HEK293 (cell line): ENCODE measurements at regions of chr6 and their contacts with region 1.

Region 1: GRCh38 chr6:45714741-45715507 is 300.7 kb downstream of the CLIC5 start:
- H3K4me3 ChIP-seq: no peak overlapping the region
- H3K27ac ChIP-seq: no peak overlapping the region
- H3K4me1 ChIP-seq: peaks cover 9% of the 10 kb centered on the region
- CTCF ChIP-seq: peak; percentile 62

Region 2: DNA sequence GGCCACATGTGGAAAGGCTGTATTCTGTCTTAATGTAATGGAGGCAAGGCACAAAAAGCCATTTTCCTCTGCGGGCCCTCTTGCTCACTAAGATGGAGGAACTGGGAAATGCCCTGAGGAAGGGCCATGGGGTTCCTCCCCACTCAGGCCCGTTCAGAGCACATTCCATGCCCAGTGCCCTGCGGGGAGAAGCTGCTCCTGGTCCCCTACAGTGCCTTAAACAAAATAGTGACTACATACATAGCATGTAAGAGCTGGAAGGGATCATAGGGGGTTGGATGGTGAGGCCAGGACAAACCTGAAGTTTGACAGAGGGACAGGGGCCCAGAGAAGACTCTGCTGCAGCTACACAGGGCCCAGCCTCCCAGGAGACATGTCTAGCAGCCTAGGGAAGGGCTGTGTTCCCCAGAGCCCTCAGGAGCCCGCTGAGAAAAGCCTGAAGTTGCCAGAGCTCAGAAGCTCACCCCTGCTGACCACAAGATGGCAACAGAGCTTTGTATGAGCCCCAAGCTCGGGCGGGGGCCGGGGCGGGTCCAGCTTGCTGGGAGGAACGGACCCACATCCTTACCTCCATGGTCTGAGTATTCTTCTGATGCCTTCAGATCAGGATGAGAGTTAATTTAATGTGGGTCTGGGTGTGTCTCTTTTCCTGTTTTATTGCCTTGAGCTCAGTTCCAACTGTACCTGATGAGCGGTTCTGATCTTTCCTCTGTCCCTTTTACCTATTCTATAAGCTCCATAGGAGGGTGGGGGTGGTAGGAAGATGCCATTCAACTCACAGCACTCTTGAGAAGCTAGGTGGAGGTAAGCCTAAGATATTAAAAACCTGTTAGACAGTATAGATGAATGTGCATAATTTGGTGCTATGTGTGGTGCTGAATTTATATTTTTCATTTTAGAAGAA is 1084.5 kb before region 1 on chr6:
- CTCF ChIA-PET with region 1: interaction called, 36 read pairs
- POLR2A ChIA-PET with region 1: interaction called, 9 read pairs
- H3K4me3 ChIP-seq: no peak overlapping the region
- H3K27ac ChIP-seq: no peak overlapping the region
- H3K4me1 ChIP-seq: no peaks in the 10 kb centered on the region
- CTCF ChIP-seq: peak; percentile 54; the same call in 1 of the 2 replicates

Region 3: DNA sequence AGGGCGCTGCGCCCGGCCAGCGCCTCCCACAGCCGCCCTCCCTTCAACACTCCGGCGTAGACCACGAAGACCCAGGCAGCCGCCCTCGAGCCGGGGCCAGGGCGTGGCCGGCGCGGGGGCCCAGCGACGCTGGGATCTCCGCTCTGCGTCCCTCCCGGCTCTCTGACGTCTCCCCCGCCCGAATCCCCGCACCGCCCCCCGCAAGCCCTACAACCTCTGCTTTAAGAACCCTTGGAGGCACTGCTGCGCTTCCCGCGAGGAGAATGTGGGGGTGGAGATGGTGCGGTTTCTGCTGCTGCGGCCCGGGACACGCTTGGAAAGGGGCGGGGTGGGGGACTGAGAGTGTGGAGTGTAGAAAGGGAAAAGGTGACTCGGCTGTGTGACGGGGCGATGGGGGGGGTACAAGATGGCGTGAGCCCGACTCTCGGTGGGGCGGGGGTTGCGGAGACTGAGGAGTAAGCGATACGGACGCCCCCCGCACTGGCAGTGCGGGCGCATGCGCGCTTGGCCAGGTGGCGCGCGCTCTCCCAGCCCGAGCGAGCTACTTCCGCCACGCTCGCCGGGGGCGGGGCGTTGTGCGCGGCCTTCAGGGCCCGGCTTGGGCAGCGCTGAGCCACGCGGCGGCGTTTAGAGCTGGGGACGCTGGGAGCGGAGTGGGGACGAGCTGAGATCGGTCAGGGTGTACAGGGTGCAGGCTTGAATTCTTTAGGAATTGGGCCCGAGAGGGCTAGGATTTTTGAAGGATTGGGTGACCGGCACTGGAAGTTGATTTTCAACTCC is 337.2 kb before region 1 on chr6 and contains the start of gene SUPT3H:
- CTCF ChIA-PET with region 1: interaction called, 13 read pairs
- POLR2A ChIA-PET with region 1: interaction called, 12 read pairs
- H3K4me3 ChIP-seq: peak within 1 kb of the TSS; percentile 95
- H3K27ac ChIP-seq: peak within 1 kb of the TSS; percentile 95
- H3K4me1 ChIP-seq: 0 out of 2 replicates have a peak, but pooled peaks cover 4% of the 10 kb centered on the region
- CTCF ChIP-seq: peak; percentile 77; the same call in 1 of the 2 replicates

Region 4: GRCh38 chr6:45554591-45554990 is 160.3 kb before region 1 on chr6:
- CTCF ChIA-PET with region 1: interaction called, 10 read pairs
- POLR2A ChIA-PET with region 1: no interaction called
- H3K4me3 ChIP-seq: no peak overlapping the region
- H3K27ac ChIP-seq: no peak overlapping the region
- H3K4me1 ChIP-seq: peaks cover 9% of the 10 kb centered on the region; the same call in 1 of the 2 replicates
- CTCF ChIP-seq: no peak

Region 5: GRCh38 chr6:45703041-45703739 is 11.7 kb before region 1 on chr6:
- CTCF ChIA-PET with region 1: interaction called, 30 read pairs
- POLR2A ChIA-PET with region 1: no interaction called
- H3K4me3 ChIP-seq: no peak overlapping the region
- H3K27ac ChIP-seq: no peak overlapping the region
- H3K4me1 ChIP-seq: no peaks in the 10 kb centered on the region
- CTCF ChIP-seq: no peak

Region 6: GRCh38 chr6:45864651-45865050 is 149.7 kb after region 1 on chr6:
- CTCF ChIA-PET with region 1: no interaction called
- POLR2A ChIA-PET with region 1: no interaction called
- H3K4me3 ChIP-seq: no peak overlapping the region
- H3K27ac ChIP-seq: no peak overlapping the region
- H3K4me1 ChIP-seq: no peaks in the 10 kb centered on the region
- CTCF ChIP-seq: no peak